ENCODE measurements at regions of chr16 and their contacts with region 1.

Region 1: DNA sequence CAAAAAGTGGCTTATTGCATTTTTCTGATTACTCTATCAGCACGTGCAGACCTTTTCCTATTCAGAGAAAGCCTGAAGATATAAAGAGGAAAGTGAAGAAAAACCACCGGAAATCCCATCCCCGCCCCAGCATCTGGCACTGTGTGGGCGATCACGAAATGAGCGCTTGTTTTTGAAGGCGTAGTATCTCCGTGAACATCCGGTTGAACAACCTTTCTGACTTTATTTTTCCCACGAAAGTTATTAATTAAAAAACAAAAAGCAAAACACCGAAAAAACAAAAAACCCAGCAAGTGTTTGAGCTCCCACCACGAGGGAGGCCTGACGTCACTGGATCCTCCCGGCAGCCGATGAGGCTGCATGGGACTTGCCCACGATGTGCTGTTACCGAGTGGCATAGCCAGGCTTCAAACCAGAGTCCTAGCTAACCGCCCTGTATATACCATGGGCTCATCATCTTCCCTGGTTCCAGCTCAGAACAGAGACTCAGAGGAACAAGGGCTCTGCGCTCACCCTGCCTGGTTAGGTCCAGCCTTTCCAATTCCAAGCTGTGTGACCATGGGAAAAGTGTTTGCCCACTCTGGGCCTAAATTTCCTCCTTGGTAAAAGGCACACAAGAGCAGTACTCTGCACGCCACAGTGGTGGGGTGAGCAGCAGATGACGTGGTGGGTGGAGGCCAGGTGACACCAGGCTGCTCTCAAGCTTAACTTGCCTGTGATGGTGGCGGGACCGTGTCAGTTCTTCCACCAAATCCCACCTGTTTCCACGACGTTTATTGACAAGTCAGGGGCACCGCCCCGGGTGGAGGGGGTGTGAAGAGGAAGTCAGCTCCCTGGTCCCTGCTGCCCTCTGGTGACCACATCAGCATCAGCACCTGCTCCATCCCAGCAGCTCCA is 34.3 kb upstream of the IL21R start:
- DNase-seq: peak; percentile 87
- H3K4me3 Mint-ChIP-seq: peak overlapping the region; percentile 52
- H3K27ac Mint-ChIP-seq: peak overlapping the region; percentile 96
- H3K4me1 Mint-ChIP-seq: peaks cover 55% of the 10 kb centered on the region
- H3K27me3 Mint-ChIP-seq: no peaks in the 10 kb centered on the region

Region 2: DNA sequence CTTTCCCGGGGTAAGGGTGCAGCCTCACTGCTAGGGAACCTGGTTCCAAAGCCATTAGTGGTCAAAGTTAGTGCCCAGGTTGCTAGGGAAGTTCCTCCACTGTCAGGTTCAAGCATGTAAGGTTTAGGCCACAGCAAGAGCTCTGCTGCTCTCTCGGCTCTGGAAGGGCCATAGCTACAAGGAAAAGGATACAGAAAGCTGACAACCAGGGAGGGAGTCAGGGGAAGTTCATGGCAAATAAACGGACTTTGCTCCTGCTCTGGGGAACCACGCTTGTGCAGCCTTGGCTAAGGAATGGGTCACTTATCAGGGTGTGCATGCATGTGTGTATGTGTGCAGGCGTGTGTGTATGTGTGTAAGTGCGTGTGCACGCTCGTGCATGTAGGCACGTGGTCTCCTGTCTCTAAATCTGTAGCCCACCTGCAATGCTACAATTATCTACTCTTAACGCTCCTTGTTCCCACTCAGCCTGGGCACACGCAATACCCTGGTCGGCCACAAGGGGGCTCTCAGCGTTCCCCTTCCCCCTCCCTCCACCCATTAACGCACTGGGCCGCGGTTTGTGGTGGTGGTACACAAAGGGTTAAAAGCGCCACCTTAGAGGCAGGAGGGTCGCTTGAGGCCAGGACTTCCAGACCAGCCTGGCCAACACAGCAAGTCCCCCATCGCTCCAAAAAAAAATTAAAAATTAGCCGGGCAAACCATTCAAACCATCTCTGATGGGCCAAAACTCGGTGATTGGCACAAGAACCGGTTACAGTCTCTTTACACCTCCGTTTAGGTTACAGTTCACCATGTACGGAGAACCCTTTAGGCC is 212.8 kb before region 1 on chr16:
- CTCF ChIA-PET with region 1: interaction called, 13 read pairs
- POLR2A ChIA-PET with region 1: interaction called, 3 read pairs
- DNase-seq: peak; percentile 69
- H3K4me3 Mint-ChIP-seq: no peak overlapping the region
- H3K27ac Mint-ChIP-seq: no peak overlapping the region
- H3K4me1 Mint-ChIP-seq: peaks cover 9% of the 10 kb centered on the region
- H3K27me3 Mint-ChIP-seq: no peaks in the 10 kb centered on the region

Region 3: DNA sequence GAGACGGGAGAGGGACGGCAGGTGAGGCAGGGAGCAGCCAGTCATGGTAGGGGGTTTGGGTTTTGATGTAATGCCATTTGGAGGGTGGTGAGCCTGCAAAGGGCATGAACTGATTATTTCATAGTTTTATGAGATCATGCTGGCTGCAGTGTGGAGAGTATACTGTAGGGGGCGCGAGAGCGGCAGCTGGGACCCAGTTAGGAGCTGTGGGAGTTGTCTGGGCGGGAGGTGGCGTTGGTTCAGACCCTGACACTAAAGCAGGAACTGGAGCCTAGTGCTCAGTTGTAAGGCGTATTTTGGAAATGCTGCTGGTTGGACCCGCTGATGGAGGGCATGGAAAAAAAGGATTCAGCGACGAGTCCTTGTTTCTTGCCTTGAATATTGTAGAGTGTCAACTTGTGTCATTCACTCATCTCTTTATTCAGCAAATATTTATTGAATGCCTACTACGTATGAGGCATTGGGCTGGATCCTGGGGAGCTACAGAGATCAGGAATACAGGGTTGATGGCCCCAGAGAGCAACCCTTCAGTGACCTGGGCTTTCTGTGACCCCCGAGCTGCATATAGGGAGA is 188.1 kb before region 1 on chr16:
- CTCF ChIA-PET with region 1: interaction called, 60 read pairs
- POLR2A ChIA-PET with region 1: interaction called, 20 read pairs
- DNase-seq: peak; percentile 92
- H3K4me3 Mint-ChIP-seq: no peak overlapping the region
- H3K27ac Mint-ChIP-seq: no peak overlapping the region
- H3K4me1 Mint-ChIP-seq: peaks cover 36% of the 10 kb centered on the region
- H3K27me3 Mint-ChIP-seq: peaks cover 6% of the 10 kb centered on the region

Region 4: GRCh38 chr16:27286451-27286850 is 81.3 kb before region 1 on chr16:
- CTCF ChIA-PET with region 1: no interaction called
- POLR2A ChIA-PET with region 1: no interaction called
- DNase-seq: no peak
- H3K4me3 Mint-ChIP-seq: no peak overlapping the region
- H3K27ac Mint-ChIP-seq: no peak overlapping the region
- H3K4me1 Mint-ChIP-seq: peaks cover 66% of the 10 kb centered on the region
- H3K27me3 Mint-ChIP-seq: peaks cover 20% of the 10 kb centered on the region

Region 5: GRCh38 chr16:27313422-27314160 is 54.1 kb before region 1 on chr16 and contains the start of gene IL4R:
- CTCF ChIA-PET with region 1: interaction called, 32 read pairs
- POLR2A ChIA-PET with region 1: interaction called, 40 read pairs
- DNase-seq: peak; percentile 69
- H3K4me3 Mint-ChIP-seq: peak within 1 kb of the TSS; percentile 97
- H3K27ac Mint-ChIP-seq: peak within 1 kb of the TSS; percentile 98
- H3K4me1 Mint-ChIP-seq: peaks cover 45% of the 10 kb centered on the region
- H3K27me3 Mint-ChIP-seq: peaks cover 8% of the 10 kb centered on the region
- total RNA-seq, gene IL4R: 257 to 268 TPM

Region 6: DNA sequence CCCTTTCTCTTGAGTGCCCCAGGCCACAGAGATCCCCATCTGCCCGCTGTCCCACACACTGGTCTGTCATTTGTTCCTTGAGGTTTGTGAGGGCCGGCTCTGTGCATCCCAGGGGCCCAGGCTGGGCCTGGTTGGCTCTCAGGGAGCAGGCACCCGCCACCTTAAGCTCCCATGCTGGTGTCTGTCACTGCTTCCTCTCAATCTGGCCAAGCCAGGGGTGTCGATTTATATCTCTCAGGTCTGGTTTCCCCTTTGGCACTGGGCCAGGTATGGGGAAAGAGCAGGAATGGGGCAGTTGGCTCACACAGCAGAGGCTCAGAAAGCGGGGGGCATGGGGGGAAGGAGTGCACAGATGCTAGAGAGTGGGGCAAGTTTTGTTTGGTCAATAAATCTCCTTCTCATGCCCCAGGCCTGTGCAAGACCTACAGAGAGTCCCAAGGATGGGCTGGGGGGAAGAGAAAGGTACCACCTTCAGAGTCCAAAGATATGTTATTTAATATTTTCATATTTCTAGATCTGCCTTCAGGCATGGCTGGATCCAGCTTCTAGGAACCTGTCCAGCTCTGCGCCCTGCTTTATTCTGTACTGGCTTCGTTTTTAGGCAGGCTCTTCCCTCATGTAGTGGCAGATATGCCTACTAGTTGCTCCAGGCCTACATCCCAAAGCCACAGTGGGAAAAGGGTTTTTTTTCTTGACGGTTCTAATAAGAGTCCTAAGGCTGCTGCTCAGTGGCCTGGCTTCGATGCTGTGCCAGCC is 19.6 kb before region 1 on chr16:
- CTCF ChIA-PET with region 1: no interaction called
- POLR2A ChIA-PET with region 1: interaction called, 12 read pairs
- DNase-seq: no peak
- H3K4me3 Mint-ChIP-seq: no peak overlapping the region
- H3K27ac Mint-ChIP-seq: peak overlapping the region; percentile 51
- H3K4me1 Mint-ChIP-seq: peaks cover 16% of the 10 kb centered on the region
- H3K27me3 Mint-ChIP-seq: no peaks in the 10 kb centered on the region

Region 7: DNA sequence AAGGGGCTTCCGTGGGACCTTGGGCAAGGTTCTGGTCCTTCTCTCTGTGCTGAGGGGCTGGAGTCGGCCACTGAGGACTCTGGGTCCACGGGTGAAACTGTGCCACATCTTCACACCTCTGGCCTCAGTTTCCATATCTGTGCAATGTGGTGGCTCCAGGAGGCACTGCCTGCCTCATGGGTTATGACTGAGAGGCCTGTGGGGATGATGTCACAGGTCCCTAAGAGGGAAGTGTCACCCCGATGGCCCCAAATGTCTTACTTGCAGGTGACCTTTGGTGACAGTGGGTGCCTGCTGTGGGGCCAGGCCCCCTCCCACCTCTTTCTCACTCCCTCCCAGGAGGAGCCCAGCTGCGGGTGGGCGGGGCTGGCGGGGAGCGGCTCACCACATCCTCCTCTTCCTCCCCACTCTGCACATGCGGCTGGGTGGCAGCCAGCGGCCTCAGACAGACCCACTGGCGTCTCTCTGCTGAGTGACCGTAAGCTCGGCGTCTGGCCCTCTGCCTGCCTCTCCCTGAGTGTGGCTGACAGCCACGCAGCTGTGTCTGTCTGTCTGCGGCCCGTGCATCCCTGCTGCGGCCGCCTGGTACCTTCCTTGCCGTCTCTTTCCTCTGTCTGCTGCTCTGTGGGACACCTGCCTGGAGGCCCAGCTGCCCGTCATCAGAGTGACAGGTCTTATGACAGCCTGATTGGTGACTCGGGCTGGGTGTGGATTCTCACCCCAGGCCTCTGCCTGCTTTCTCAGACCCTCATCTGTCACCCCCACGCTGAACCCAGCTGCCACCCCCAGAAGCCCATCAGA is 34.3 kb after region 1 on chr16 and contains the start of gene IL21R:
- CTCF ChIA-PET with region 1: interaction called, 22 read pairs
- POLR2A ChIA-PET with region 1: interaction called, 80 read pairs
- DNase-seq: peak; percentile 88
- H3K4me3 Mint-ChIP-seq: peak within 1 kb of the TSS; percentile 92
- H3K27ac Mint-ChIP-seq: peak within 1 kb of the TSS; percentile 96
- H3K4me1 Mint-ChIP-seq: peaks cover 70% of the 10 kb centered on the region
- H3K27me3 Mint-ChIP-seq: peaks cover 6% of the 10 kb centered on the region
- total RNA-seq, gene IL21R: 29.2 to 29.5 TPM

Region 8: GRCh38 chr16:27449434-27450195 is 81.9 kb after region 1 on chr16:
- CTCF ChIA-PET with region 1: interaction called, 4 read pairs
- POLR2A ChIA-PET with region 1: interaction called, 23 read pairs
- DNase-seq: peak; percentile 56
- H3K4me3 Mint-ChIP-seq: peak overlapping the region; percentile 18
- H3K27ac Mint-ChIP-seq: peak overlapping the region; percentile 50
- H3K4me1 Mint-ChIP-seq: peaks cover 62% of the 10 kb centered on the region
- H3K27me3 Mint-ChIP-seq: no peaks in the 10 kb centered on the region

Region 9: DNA sequence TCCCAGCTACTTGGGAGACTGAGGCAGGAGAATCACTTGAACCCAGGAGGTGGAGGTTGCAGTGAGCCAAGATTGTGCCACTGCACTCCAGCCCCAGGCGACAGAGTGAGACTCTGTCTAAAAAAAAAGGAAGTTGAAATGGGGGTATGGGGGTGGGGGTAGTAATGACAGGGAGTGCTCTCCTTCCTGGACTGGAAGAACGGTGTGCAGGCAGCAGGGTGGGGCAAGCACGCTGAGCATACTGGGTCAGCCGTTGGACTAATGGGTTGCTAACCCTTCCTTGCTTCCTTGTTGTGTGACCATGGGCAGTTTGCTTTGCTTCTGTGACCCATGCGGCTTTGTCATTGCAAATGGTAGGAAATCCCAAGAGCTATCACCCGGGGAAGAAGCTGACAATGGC is 198.7 kb after region 1 on chr16:
- CTCF ChIA-PET with region 1: no interaction called
- POLR2A ChIA-PET with region 1: no interaction called
- DNase-seq: no peak
- H3K4me3 Mint-ChIP-seq: no peak overlapping the region
- H3K27ac Mint-ChIP-seq: no peak overlapping the region
- H3K4me1 Mint-ChIP-seq: no peaks in the 10 kb centered on the region
- H3K27me3 Mint-ChIP-seq: no peaks in the 10 kb centered on the region

Region 10: GRCh38 chr16:27642756-27643155 is 275.0 kb after region 1 on chr16:
- CTCF ChIA-PET with region 1: no interaction called
- POLR2A ChIA-PET with region 1: no interaction called
- DNase-seq: no peak
- H3K4me3 Mint-ChIP-seq: no peak overlapping the region
- H3K27ac Mint-ChIP-seq: no peak overlapping the region
- H3K4me1 Mint-ChIP-seq: no peaks in the 10 kb centered on the region
- H3K27me3 Mint-ChIP-seq: no peaks in the 10 kb centered on the region